Activated B cell treated with CpG ODN at 0.5 μM for 24 hours (primary cell): ENCODE measurements at regions of chr5 and their contacts with region 1.

Region 1: DNA sequence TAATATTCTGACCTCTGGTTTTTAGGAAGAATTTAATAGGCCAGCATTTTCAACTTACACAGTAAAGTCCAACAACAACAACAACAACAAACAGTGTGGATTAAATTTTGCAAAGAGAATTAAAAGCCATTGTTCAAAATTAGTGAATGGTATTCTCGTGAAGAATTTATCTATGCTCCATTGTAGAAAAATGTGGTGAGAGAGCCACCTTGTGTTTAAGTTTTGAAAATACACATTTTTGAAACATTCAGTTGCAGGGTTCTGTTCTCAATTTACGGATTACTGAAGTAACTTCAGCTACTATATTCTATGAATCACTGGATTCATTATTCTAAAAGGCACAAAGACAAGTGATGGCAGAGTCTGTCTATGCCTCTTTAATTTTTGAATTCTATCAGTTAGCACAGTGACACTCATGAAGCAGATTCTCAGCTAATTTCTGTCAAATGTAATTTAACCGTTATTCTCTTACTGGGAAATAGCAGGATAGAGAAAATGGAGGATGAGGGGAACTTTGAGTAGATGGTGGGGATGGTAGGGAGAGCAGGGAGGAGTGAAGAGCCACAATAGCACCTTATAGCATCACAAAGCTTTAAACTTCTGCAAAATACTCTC is 11.0 kb downstream of the CCDC152 start:
- DNase-seq: no peak
- ATAC-seq: no peak
- H3K4me3 Mint-ChIP-seq: no peak overlapping the region
- H3K27ac Mint-ChIP-seq: no peak overlapping the region
- H3K4me1 Mint-ChIP-seq: no peaks in the 10 kb centered on the region
- H3K27me3 Mint-ChIP-seq: peaks cover 6% of the 10 kb centered on the region
- CTCF ChIP-seq: no peak

Region 2: GRCh38 chr5:40904205-40904993 is 1863.2 kb before region 1 on chr5:
- CTCF ChIA-PET with region 1: no interaction called
- POLR2A ChIA-PET with region 1: no interaction called
- intact Hi-C with region 1: loop called (anchors 2 kb)
- DNase-seq: no peak
- ATAC-seq: no peak
- H3K4me3 Mint-ChIP-seq: no peak overlapping the region
- H3K27ac Mint-ChIP-seq: no peak overlapping the region
- H3K4me1 Mint-ChIP-seq: no peaks in the 10 kb centered on the region
- H3K27me3 Mint-ChIP-seq: peaks cover 5% of the 10 kb centered on the region
- CTCF ChIP-seq: no peak

Region 3: GRCh38 chr5:42057254-42057690 is 710.3 kb before region 1 on chr5:
- CTCF ChIA-PET with region 1: interaction called, 5 read pairs
- POLR2A ChIA-PET with region 1: no interaction called
- intact Hi-C with region 1: loop called (anchors 2 kb)
- DNase-seq: no peak
- ATAC-seq: peak; percentile 89
- H3K4me3 Mint-ChIP-seq: no peak overlapping the region
- H3K27ac Mint-ChIP-seq: no peak overlapping the region
- H3K4me1 Mint-ChIP-seq: peaks cover 2% of the 10 kb centered on the region
- H3K27me3 Mint-ChIP-seq: peaks cover 12% of the 10 kb centered on the region
- CTCF ChIP-seq: peak; percentile 62

Region 4: DNA sequence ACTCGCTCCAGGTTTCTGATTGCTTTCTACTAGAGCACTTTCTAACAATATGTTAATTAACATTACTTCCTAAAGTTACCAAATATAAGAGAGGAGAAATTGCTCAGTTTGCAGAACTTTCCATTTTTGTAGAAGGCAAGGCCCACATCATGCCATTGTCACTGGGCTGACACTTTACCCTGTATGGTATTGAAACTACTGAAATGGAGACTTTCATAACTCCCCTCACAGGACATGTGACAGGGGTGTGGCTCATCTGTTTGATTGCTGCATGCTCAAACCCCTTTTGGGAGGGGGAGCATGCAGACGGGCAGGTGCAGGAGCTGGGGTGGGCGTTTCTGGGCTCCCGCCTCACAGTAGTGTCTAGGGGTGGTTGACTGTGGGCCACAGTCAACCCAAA is 550.7 kb before region 1 on chr5:
- CTCF ChIA-PET with region 1: no interaction called
- POLR2A ChIA-PET with region 1: no interaction called
- intact Hi-C with region 1: no loop called
- DNase-seq: no peak
- ATAC-seq: no peak
- H3K4me3 Mint-ChIP-seq: no peak overlapping the region
- H3K27ac Mint-ChIP-seq: no peak overlapping the region
- H3K4me1 Mint-ChIP-seq: no peaks in the 10 kb centered on the region
- H3K27me3 Mint-ChIP-seq: no peaks in the 10 kb centered on the region
- CTCF ChIP-seq: no peak

Region 5: GRCh38 chr5:42514754-42515153 is 252.8 kb before region 1 on chr5:
- CTCF ChIA-PET with region 1: interaction called, 6 read pairs
- POLR2A ChIA-PET with region 1: no interaction called
- intact Hi-C with region 1: loop called (anchors 1 kb)
- DNase-seq: no peak
- ATAC-seq: no peak
- H3K4me3 Mint-ChIP-seq: no peak overlapping the region
- H3K27ac Mint-ChIP-seq: no peak overlapping the region
- H3K4me1 Mint-ChIP-seq: no peaks in the 10 kb centered on the region
- H3K27me3 Mint-ChIP-seq: no peaks in the 10 kb centered on the region
- CTCF ChIP-seq: no peak

Region 6: GRCh38 chr5:42583322-42583721 is 184.3 kb before region 1 on chr5:
- CTCF ChIA-PET with region 1: interaction called, 4 read pairs
- POLR2A ChIA-PET with region 1: no interaction called
- intact Hi-C with region 1: loop called (anchors 2 kb)
- DNase-seq: no peak
- ATAC-seq: no peak
- H3K4me3 Mint-ChIP-seq: no peak overlapping the region
- H3K27ac Mint-ChIP-seq: no peak overlapping the region
- H3K4me1 Mint-ChIP-seq: peaks cover 3% of the 10 kb centered on the region
- H3K27me3 Mint-ChIP-seq: peaks cover 8% of the 10 kb centered on the region
- CTCF ChIP-seq: no peak

Region 7: GRCh38 chr5:42943931-42944631 is 176.5 kb after region 1 on chr5:
- CTCF ChIA-PET with region 1: no interaction called
- POLR2A ChIA-PET with region 1: no interaction called
- intact Hi-C with region 1: no loop called
- DNase-seq: no peak
- ATAC-seq: no peak
- H3K4me3 Mint-ChIP-seq: no peak overlapping the region
- H3K27ac Mint-ChIP-seq: no peak overlapping the region
- H3K4me1 Mint-ChIP-seq: peaks cover 6% of the 10 kb centered on the region
- H3K27me3 Mint-ChIP-seq: peaks cover 17% of the 10 kb centered on the region
- CTCF ChIP-seq: no peak